Spleen (tissue), 13 donors: ENCODE measurements at regions of chr20 and their contacts with region 1.

Region 1: GRCh38 chr20:19995220-19995863 is 21.8 kb upstream of the NAA20 start:
- DNase-seq: no peak
- H3K4me3 ChIP-seq: no peak overlapping the region
- H3K27ac ChIP-seq: peak overlapping the region in 2 of 8 donors; percentile 3 to 57
- H3K4me1 ChIP-seq: peaks cover 14 to 93% (median 42%) of the 10 kb centered on the region in 6 donors
- H3K27me3 ChIP-seq: no peaks in the 10 kb centered on the region
- CTCF ChIP-seq: peak; percentile 47 to 83 (median 75)
- POLR2A ChIP-seq: no peak

Region 2: DNA sequence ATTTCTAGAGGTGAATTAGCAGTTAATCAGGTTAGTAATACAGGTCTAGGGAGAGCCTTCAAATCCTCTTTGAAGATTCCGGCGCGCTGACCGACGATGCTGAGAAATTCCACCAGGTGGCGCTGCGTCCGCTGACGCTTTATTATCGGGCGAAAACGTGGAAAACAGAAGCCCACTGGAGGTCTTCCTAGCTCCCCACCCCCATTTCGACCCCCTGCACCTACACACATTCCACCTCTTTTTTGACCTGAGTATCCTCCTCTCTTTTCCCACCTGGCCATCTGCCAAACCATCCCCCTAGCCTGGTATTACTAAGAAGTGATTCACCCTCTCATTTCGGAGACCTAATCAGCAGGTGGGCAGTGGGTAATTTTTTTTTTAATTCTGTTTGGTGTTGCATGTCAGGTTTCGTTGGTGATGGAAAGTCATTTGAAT is 302.6 kb before region 1 on chr20:
- intact Hi-C with region 1: loop called (anchors 10 kb)
- DNase-seq: peak; percentile 87
- H3K4me3 ChIP-seq: no peak overlapping the region
- H3K27ac ChIP-seq: no peak overlapping the region
- H3K4me1 ChIP-seq: peaks cover 0 to 26% (median 14%) of the 10 kb centered on the region in 6 donors
- H3K27me3 ChIP-seq: no peaks in the 10 kb centered on the region
- CTCF ChIP-seq: peak; percentile 36 to 91 (median 84)
- POLR2A ChIP-seq: no peak

Region 3: DNA sequence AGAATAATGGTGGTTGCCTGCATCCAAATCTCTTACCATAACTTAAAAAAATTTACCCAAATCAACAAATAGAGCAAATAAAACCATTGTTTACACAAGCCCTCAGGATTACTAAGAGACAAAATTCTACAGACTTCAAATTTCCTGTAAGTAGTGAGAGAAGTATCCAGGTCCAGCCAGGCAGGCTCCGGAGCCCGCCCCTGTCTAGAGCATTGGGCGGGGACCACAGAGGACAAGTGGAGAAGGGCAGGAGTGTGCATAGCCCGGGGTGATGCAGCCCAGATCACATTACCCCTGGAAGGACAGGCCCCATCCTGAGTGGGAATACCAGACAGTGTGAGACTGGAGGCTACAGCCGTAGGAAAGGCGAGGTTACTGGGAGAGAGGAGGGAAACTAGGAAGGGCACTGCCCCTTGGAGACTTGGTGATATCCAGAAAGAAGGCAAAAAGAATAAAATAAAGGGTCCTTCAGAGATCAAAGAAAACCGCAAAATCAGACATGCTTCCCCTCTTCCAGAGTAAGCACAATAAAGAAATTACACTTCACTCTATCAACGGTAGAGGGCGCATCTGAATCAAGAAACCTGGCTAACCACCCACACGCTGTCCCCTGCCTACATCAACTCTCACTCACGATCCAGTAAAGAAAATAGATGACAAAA is 210.7 kb before region 1 on chr20:
- intact Hi-C with region 1: loop called (anchors 5 kb)
- DNase-seq: no peak
- H3K4me3 ChIP-seq: no peak overlapping the region
- H3K27ac ChIP-seq: peak overlapping the region in 6 of 8 donors; percentile 25 to 60 (median 42)
- H3K4me1 ChIP-seq: peaks cover 5 to 45% (median 25%) of the 10 kb centered on the region in 6 donors
- H3K27me3 ChIP-seq: no peaks in the 10 kb centered on the region
- CTCF ChIP-seq: peak; percentile 35 to 91 (median 73)
- POLR2A ChIP-seq: no peak

Region 4: DNA sequence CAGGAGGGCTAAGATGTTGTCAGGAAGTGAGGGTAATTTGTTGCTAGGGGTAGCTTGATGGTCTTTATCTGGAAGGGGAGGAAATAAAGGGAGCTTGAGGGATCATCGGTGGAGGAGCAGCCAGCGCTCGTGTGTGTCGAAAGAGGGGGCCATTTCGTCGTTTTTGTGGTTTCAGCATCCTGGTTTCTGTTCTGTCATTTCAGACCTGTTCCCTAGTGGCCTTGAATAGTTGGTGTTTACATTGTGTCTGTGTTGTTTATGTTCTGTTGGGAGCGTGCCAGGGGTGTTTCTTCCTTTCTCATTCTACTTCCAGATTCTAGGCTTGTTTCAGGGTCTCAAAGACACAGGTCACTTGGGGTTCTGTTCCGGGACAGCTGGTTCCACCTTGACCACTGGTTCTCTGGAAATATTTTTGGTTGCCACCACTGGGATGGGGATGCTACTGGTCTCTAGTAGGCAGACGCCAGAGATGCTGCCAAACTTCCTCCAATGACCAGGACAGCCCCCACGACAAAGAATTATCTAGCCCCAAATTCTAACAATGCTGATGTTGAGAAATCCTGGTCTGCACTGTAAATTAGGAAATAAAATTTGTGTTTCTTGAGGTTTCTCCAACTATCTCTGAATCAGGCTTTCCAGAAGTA is 92.1 kb before region 1 on chr20:
- intact Hi-C with region 1: loop called (anchors 10 kb)
- DNase-seq: no peak
- H3K4me3 ChIP-seq: no peak overlapping the region
- H3K27ac ChIP-seq: peak overlapping the region in 6 of 8 donors; percentile 15 to 68 (median 50)
- H3K4me1 ChIP-seq: peaks cover 0 to 68% (median 30%) of the 10 kb centered on the region in 6 donors
- H3K27me3 ChIP-seq: no peaks in the 10 kb centered on the region
- CTCF ChIP-seq: peak in 7 of 11 experiments; percentile 31 to 54 (median 44)
- POLR2A ChIP-seq: no peak

Region 5: GRCh38 chr20:20060234-20060998 is 65.1 kb after region 1 on chr20:
- intact Hi-C with region 1: no loop called
- DNase-seq: no peak
- H3K4me3 ChIP-seq: no peak overlapping the region
- H3K27ac ChIP-seq: no peak overlapping the region
- H3K4me1 ChIP-seq: no peaks in the 10 kb centered on the region
- H3K27me3 ChIP-seq: peaks cover 0 to 17% (median 0%) of the 10 kb centered on the region in 7 donors
- CTCF ChIP-seq: no peak
- POLR2A ChIP-seq: no peak

Region 6: GRCh38 chr20:20317621-20318364 is 322.5 kb after region 1 on chr20:
- intact Hi-C with region 1: no loop called
- DNase-seq: no peak
- H3K4me3 ChIP-seq: no peak overlapping the region
- H3K27ac ChIP-seq: peak overlapping the region in 4 of 8 donors; percentile 23 to 43 (median 36)
- H3K4me1 ChIP-seq: peaks cover 0 to 23% (median 6%) of the 10 kb centered on the region in 6 donors
- H3K27me3 ChIP-seq: no peaks in the 10 kb centered on the region
- CTCF ChIP-seq: no peak
- POLR2A ChIP-seq: no peak